ENCODE measurements at regions of chr14 and their contacts with region 1.

Region 1: GRCh38 chr14:105363847-105364708 is 34.3 kb upstream of the TEX22 start:
- DNase-seq: no peak
- H3K4me3 ChIP-seq: no peak overlapping the region
- H3K27ac ChIP-seq: no peak overlapping the region
- H3K4me1 ChIP-seq: no peaks in the 10 kb centered on the region
- H3K27me3 ChIP-seq: no peaks in the 10 kb centered on the region
- CTCF ChIP-seq: no peak

Region 2: DNA sequence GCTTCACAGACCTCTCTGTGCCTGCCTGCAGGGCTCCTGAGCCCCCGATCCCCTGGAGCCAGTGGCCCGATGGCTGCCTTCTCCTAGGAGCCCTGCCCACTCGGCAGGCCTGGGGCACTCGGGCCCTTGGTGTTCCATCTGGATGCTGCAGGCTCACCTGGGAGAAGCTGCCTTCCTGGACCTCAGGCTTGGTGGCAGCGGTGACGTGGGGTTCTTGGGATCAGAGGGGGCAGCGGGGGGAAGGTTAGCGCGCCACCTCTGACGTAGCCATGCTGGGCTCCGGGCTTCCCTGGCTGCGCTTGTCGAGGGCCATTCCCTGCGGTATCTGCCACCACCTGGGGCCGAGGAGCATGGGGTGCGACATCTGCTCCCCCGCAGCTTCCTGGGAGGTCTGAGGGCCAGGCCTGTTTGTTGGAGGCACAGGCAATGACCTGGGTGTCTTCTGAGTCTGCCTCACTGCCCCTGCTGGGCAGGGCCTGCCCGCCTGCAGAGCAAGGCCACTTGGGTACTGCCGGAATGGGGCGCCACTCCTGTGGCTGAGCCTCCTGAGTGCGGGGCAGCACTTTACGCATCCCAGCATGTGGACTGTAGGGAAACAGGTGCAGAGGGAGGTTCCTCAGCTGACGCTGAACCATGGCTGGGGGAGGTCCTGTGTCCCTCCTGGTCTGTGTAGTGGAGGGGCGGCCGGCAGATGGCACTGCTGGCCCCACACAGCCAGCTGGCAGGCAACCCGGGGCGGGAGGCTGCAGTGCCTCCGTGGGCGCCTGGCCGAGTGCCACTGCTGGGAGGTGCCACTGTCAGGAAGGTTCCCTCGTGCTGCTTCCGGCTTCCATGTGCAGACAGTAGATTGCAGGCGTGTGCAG is 75.8 kb after region 1 on chr14:
- intact Hi-C with region 1: loop called (anchors 5 kb)
- DNase-seq: no peak
- H3K4me3 ChIP-seq: no peak overlapping the region
- H3K27ac ChIP-seq: no peak overlapping the region
- H3K4me1 ChIP-seq: no peaks in the 10 kb centered on the region
- H3K27me3 ChIP-seq: no peaks in the 10 kb centered on the region
- CTCF ChIP-seq: no peak

Measured in colonic mucosa (tissue), 4 donors.